WTC11 (cell line): ENCODE measurements at regions of chr7 and their contacts with region 1.

Region 1: DNA sequence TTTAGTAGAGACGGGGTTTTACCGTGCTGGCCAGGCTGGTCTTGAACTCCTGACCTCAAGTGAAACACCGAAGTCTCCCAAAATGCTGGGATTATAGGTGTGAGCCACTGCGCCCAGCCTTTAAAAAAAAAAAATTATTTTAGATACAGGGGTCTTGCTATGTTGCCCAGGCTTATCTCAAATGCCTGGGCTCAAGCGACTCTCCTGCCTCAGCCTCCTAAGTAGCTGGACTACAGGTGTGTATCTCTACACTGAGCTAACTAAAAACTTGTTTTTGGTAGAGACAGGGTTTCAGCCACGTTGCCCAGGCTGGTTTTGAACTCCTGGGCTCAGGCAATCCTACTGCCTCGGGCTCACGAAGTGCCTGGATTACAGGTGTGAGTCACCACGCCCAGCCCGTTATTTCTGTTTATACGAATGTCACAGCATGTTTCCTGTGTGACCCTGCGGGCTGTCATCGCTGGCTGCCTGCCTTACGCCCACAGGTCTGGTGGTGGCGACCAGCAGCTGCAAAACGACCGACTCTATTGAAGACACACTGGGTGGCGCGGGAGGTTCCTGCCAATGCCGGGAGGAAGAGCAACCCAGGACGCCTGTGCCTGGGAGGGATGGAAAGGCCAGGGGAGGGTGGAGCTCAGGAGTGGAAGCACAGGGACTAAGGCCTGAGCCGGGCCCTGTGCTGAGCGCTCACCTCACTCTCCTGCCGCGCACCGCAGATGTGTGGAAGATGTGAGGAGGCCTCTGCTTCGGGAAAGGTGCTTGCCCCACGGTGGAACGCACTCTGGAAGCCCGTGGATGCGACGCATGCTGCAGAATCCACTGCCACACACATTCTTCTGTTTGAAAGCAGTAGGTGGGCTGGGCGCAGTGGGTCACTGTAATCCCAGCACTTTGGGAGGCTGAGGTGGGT is 32.8 kb downstream of the AMZ1 start:
- DNase-seq: no peak
- ATAC-seq: peak; percentile 10; the same call in 1 of the 2 replicates
- H3K4me3 Mint-ChIP-seq: no peak overlapping the region
- H3K27ac Mint-ChIP-seq: peak overlapping the region; percentile 63
- H3K4me1 Mint-ChIP-seq: peaks cover 3% of the 10 kb centered on the region; the same call in 1 of the 2 replicates
- H3K27me3 Mint-ChIP-seq: no peaks in the 10 kb centered on the region
- CTCF ChIP-seq: no peak

Region 2: GRCh38 chr7:2688409-2689331 is 32.2 kb before region 1 on chr7:
- CTCF ChIA-PET with region 1: interaction called, 10 read pairs
- POLR2A ChIA-PET with region 1: no interaction called
- DNase-seq: peak; percentile 53
- ATAC-seq: peak; percentile 73
- H3K4me3 Mint-ChIP-seq: peak overlapping the region; percentile 61
- H3K27ac Mint-ChIP-seq: no peak overlapping the region
- H3K4me1 Mint-ChIP-seq: peaks cover 12% of the 10 kb centered on the region
- H3K27me3 Mint-ChIP-seq: peaks cover 32% of the 10 kb centered on the region
- CTCF ChIP-seq: no peak

Region 3: GRCh38 chr7:2732959-2733584 is 12.2 kb after region 1 on chr7:
- CTCF ChIA-PET with region 1: interaction called, 16 read pairs
- POLR2A ChIA-PET with region 1: no interaction called
- DNase-seq: peak; percentile 9
- ATAC-seq: no peak
- H3K4me3 Mint-ChIP-seq: no peak overlapping the region
- H3K27ac Mint-ChIP-seq: peak overlapping the region; percentile 91
- H3K4me1 Mint-ChIP-seq: peaks cover 39% of the 10 kb centered on the region
- H3K27me3 Mint-ChIP-seq: no peaks in the 10 kb centered on the region
- CTCF ChIP-seq: no peak